Prostate gland (tissue), 2 donors: ENCODE measurements at regions of chr18 and their contacts with region 1.

Region 1: GRCh38 chr18:63994783-63995399 is 25.0 kb downstream of the SERPINB8 start:
- DNase-seq: no peak
- H3K4me3 ChIP-seq: no peak overlapping the region
- H3K27ac ChIP-seq: no peak overlapping the region
- H3K4me1 ChIP-seq: no peaks in the 10 kb centered on the region
- H3K27me3 ChIP-seq: no peaks in the 10 kb centered on the region
- CTCF ChIP-seq: peak; percentile 64 to 76 (median 73)
- POLR2A ChIP-seq: no peak

Region 2: DNA sequence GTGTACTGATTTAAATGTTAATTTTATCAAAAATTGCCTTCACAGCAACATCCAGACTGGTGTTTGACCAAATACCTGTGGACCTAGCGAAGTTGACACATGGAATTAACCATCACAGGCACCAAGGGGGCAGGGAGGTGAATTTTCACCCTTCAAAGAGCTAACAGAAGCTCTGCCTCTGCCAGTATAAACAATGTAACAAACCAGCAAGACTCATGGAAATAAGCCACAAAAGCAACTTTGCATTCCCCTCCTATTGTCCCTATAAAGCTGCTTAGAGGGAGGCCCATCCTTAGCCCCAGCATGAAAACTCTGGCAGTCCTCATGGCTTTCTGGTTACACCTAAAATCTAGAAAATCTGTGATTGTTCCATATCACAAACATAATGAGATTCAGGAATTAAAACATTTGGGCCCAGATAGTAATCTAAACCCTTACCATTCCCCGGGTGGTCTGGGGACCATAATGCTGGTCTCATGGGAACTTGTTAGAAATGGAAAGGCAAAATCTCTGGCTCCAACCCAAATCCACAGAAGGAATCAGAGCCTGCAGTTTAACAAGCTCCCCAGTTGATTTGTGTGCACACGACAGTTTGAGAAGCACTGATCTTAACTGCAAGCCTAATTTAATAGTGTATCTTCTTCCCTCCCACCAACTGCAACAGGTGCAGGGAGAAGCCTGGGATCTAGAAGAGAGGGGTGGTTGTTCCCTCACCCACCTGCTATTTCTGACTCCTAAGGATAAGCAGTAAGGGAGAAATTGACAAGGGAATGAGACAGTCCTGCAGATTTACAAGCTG is 269.0 kb before region 1 on chr18:
- intact Hi-C with region 1: no loop called
- DNase-seq: no peak
- H3K4me3 ChIP-seq: no peak overlapping the region
- H3K27ac ChIP-seq: no peak overlapping the region
- H3K4me1 ChIP-seq: peaks cover 6% of the 10 kb centered on the region
- H3K27me3 ChIP-seq: no peaks in the 10 kb centered on the region
- CTCF ChIP-seq: no peak
- POLR2A ChIP-seq: no peak

Region 3: GRCh38 chr18:63963615-63964256 is 31.2 kb before region 1 on chr18:
- intact Hi-C with region 1: loop called (anchors 5 kb)
- DNase-seq: peak; percentile 52
- H3K4me3 ChIP-seq: no peak overlapping the region
- H3K27ac ChIP-seq: no peak overlapping the region
- H3K4me1 ChIP-seq: no peaks in the 10 kb centered on the region
- H3K27me3 ChIP-seq: no peaks in the 10 kb centered on the region
- CTCF ChIP-seq: peak; percentile 16 to 72 (median 66)
- POLR2A ChIP-seq: no peak